Activated T-helper 2 cell treated with anti-CD3 and anti-CD28 coated beads, Interferon-gamma antibody, Interleukin-2, Interleukin-4, amounts not matched to agents 10 μg/mL and 5 μg/mL and 100 μg/mL, durations not matched to agents 14 hours and 24 hours and 36 hours (primary cell): ENCODE measurements at regions of chr6 and their contacts with region 1.

Region 1: DNA sequence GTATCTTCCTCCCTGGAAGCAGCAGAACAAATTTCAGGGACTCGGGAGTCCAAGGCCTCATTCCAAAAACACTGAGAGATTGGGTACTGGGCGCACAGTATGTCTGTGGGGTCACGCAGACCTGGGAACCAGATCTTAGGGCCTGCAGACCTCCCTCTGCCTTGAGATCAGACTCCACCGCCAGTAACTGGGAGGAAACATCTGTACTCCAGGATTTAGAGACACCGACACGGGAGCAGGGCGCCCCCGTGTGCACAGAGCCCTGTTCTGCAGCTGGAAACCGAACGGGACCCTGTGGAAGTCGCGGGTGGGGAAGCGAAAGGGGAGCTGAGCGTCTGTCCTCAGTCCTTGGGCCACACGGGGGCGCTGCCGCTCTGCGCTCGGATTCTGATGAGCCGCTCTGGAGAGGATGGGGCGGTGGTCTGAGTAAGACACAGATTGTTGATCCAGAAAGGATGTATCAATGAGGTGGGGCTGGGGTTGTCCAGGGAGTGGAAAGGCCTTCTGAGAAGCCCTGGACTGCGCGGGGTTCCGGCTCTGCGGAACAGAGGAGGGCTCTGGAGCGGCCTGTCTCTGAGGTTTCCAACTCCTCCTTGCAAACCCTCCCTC is 35.7 kb upstream of the HLA-E start:
- DNase-seq: peak; percentile 79
- H3K4me3 Mint-ChIP-seq: no peak overlapping the region
- H3K27ac Mint-ChIP-seq: no peak overlapping the region
- H3K4me1 Mint-ChIP-seq: peaks cover 21% of the 10 kb centered on the region
- H3K27me3 Mint-ChIP-seq: peaks cover 84% of the 10 kb centered on the region

Region 2: GRCh38 chr6:30101444-30102413 is 351.9 kb before region 1 on chr6:
- intact Hi-C with region 1: no loop called
- DNase-seq: peak; percentile 62
- H3K4me3 Mint-ChIP-seq: peak overlapping the region; percentile 67
- H3K27ac Mint-ChIP-seq: no peak overlapping the region
- H3K4me1 Mint-ChIP-seq: peaks cover 28% of the 10 kb centered on the region
- H3K27me3 Mint-ChIP-seq: peaks cover 65% of the 10 kb centered on the region

Region 3: GRCh38 chr6:30344868-30345671 is 108.5 kb before region 1 on chr6 and contains the start of gene RPP21:
- intact Hi-C with region 1: no loop called
- DNase-seq: peak; percentile 84
- H3K4me3 Mint-ChIP-seq: peak within 1 kb of the TSS; percentile 88
- H3K27ac Mint-ChIP-seq: peak within 1 kb of the TSS; percentile 77
- H3K4me1 Mint-ChIP-seq: peaks cover 34% of the 10 kb centered on the region
- H3K27me3 Mint-ChIP-seq: peaks cover 16% of the 10 kb centered on the region
- total RNA-seq, gene RPP21: 40.6 and 41.9 TPM in 2 replicates

Region 4: GRCh38 chr6:30357678-30358540 is 95.7 kb before region 1 on chr6:
- intact Hi-C with region 1: loop called (anchors 5 kb)
- DNase-seq: peak; percentile 22
- H3K4me3 Mint-ChIP-seq: peak overlapping the region; percentile 77
- H3K27ac Mint-ChIP-seq: no peak overlapping the region
- H3K4me1 Mint-ChIP-seq: peaks cover 2% of the 10 kb centered on the region
- H3K27me3 Mint-ChIP-seq: peaks cover 80% of the 10 kb centered on the region

Region 5: DNA sequence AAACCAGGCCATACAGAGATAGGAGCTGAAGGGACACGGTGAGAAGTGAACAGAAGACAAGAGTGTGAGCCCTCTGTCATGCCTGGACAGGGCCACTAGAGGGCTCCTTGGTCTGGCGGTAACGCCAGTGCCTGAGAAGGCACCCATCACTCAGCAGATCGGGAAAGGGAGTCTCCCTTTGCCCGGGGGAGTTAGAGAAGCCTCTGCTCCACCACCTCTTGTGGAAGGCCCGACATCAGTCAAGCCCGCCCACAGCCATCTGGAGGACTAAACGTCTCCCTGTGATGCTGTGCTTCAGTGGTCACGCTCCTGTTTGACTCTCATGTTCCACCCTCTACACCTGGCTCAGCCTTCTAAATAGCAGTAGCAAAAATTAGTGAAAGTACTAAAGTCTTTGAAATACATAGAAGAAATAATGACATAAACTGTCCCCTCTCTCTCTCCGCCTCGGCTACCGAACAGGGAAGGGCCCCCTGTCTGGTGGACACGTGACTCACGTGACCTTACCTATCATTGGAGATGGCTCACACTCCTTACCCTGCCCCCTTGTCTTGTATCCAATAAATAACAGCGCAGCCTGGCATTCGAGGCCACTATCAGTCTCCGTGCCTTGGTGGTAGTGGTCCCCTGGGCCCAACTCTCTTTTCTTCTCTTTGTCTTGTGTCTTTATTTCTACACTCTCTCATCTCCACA is 42.0 kb before region 1 on chr6:
- intact Hi-C with region 1: loop called (anchors 2 kb)
- DNase-seq: peak; percentile 44
- H3K4me3 Mint-ChIP-seq: no peak overlapping the region
- H3K27ac Mint-ChIP-seq: no peak overlapping the region
- H3K4me1 Mint-ChIP-seq: peaks cover 6% of the 10 kb centered on the region
- H3K27me3 Mint-ChIP-seq: peaks cover 65% of the 10 kb centered on the region

Region 6: GRCh38 chr6:30463651-30464618 is 10.3 kb after region 1 on chr6:
- intact Hi-C with region 1: loop called (anchors 2 kb)
- DNase-seq: peak; percentile 57
- H3K4me3 Mint-ChIP-seq: no peak overlapping the region
- H3K27ac Mint-ChIP-seq: no peak overlapping the region
- H3K4me1 Mint-ChIP-seq: peaks cover 13% of the 10 kb centered on the region
- H3K27me3 Mint-ChIP-seq: peaks cover 90% of the 10 kb centered on the region

Region 7: DNA sequence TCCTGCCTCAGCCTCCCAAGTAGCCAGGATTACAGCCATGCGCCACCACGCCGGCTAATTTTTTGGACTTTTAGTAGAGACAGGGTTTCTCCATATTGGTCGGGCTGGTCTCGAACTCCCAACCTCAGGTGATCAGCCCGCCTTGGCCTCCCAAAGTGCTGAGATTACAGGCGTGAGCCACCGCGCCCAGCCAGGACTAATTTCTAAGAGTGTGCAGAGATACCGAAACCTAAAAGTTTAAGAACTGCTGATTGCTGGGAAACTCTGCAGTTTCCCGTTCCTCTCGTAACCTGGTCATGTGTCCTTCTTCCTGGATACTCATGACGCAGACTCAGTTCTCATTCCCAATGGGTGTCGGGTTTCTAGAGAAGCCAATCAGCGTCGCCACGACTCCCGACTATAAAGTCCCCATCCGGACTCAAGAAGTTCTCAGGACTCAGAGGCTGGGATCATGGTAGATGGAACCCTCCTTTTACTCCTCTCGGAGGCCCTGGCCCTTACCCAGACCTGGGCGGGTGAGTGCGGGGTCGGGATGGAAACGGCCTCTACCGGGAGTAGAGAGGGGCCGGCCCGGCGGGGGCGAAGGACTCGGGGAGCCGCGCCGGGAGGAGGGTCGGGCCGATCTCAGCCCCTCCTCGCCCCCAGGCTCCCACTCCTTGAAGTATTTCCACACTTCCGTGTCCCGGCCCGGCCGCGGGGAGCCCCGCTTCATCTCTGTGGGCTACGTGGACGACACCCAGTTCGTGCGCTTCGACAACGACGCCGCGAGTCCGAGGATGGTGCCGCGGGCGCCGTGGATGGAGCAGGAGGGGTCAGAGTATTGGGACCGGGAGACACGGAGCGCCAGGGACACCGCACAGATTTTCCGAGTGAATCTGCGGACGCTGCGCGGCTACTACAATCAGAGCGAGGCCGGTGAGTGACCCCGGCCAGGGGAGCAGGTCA is 35.7 kb after region 1 on chr6 and contains the start of gene HLA-E:
- intact Hi-C with region 1: loop called (anchors 5 kb)
- DNase-seq: peak; percentile 90
- H3K4me3 Mint-ChIP-seq: peak within 1 kb of the TSS; percentile 98
- H3K27ac Mint-ChIP-seq: peak within 1 kb of the TSS; percentile 97
- H3K4me1 Mint-ChIP-seq: peaks cover 51% of the 10 kb centered on the region
- H3K27me3 Mint-ChIP-seq: no peaks in the 10 kb centered on the region
- total RNA-seq, gene HLA-E: 358 and 360 TPM in 2 replicates